ENCODE measurements at regions of chr17 and their contacts with region 1.

Region 1: GRCh38 chr17:68533887-68534694 is 21.9 kb downstream of the PRKAR1A start:
- DNase-seq: peak; percentile 50
- ATAC-seq: peak; percentile 42; the same call in 1 of the 2 replicates
- H3K4me3 ChIP-seq: no peak overlapping the region
- H3K27ac ChIP-seq: no peak overlapping the region
- H3K4me1 ChIP-seq: no peaks in the 10 kb centered on the region
- H3K27me3 ChIP-seq: no peaks in the 10 kb centered on the region
- CTCF ChIP-seq: peak; percentile 43
- POLR2A ChIP-seq: no peak
- RAD21 ChIP-seq: no peak

Region 2: DNA sequence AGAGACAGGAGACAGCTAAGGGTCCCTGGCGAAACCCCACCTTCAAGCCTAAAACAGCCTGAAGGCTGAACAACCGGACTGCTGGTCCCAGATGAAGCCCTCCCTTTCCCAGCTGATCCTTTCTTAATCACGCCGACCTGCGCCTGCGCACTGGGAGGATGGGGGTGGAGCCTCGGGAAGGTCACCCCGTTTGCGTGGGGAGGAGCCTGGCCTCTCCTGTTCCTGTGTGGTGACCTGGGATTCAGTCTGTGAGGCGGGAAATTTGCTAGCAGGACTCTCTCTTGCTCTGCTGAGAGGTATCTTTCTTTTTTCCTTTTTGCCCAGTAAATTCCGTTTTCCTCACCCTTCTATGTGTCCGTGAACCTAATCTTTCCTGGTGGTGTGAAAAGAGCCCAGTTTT is 57.5 kb after region 1 on chr17:
- CTCF ChIA-PET with region 1: no interaction called
- POLR2A ChIA-PET with region 1: no interaction called
- dilution Hi-C with region 1: no loop called
- in situ Hi-C with region 1: no loop called
- intact Hi-C with region 1: no loop called
- DNase-seq: no peak
- ATAC-seq: no peak
- H3K4me3 ChIP-seq: no peak overlapping the region
- H3K27ac ChIP-seq: no peak overlapping the region
- H3K4me1 ChIP-seq: no peaks in the 10 kb centered on the region
- H3K27me3 ChIP-seq: peaks cover 3% of the 10 kb centered on the region
- CTCF ChIP-seq: no peak
- POLR2A ChIP-seq: no peak
- RAD21 ChIP-seq: no peak

Region 3: DNA sequence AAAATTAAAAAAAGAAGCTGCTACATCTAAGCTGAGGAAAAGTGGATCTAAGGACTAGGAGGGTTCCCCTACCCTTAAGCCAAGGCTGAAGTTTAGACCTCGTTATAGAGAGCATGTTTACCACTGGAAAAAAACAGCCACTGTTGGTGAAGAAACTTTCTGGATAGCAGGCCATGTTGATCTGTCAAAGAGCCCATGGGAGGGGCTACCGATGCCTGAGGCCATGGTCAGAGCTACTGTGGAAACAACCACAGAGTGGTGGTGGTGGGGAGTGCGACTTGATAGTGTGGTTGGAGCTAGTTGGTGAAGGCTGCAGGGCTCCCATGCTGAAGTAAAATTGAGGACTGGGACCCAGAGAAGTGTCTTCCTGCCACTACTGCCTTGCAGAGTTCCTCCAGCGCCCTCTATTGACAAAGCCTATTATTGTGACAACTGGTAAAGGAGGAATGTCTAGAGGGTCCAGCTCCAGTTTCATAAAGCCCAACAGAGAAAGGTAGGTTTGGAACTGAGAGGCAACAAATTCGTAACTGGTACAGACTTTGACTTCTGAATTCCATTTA is 79.7 kb after region 1 on chr17:
- CTCF ChIA-PET with region 1: no interaction called
- POLR2A ChIA-PET with region 1: no interaction called
- dilution Hi-C with region 1: no loop called
- in situ Hi-C with region 1: no loop called
- intact Hi-C with region 1: loop called (anchors 5 kb)
- DNase-seq: no peak
- ATAC-seq: 0 out of 2 replicates have a peak, but pooled peaks have one; percentile 32
- H3K4me3 ChIP-seq: no peak overlapping the region
- H3K27ac ChIP-seq: no peak overlapping the region
- H3K4me1 ChIP-seq: no peaks in the 10 kb centered on the region
- H3K27me3 ChIP-seq: no peaks in the 10 kb centered on the region
- CTCF ChIP-seq: 0 out of 2 replicates have a peak, but pooled peaks have one; percentile 20
- POLR2A ChIP-seq: no peak
- RAD21 ChIP-seq: no peak

Region 4: DNA sequence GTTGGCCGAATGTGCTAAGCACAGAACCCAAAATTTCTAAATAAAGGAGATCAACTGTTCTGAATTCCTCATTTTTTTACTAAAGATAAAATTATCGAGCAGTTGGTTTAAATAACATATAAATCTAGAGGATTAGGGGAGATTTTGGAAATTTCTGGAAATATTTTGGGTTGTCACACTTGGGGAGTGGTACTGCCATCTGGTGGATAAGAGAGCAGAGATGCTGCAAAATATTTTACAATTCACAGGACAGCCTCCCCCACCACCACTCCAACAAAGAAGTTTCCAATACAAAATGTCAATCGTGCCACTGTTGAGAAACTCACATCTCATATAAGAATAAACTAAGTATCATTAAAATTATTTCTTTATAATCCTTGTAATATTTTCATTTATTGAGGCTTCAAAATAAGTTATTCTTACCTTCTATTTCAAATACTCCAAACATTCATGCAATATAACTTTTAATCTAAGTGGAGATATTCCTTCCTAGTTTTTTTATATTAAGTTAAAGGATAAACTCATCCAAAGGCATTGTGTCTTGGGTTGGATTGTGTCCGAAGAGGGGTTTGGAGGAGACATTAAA is 438.1 kb after region 1 on chr17:
- CTCF ChIA-PET with region 1: no interaction called
- POLR2A ChIA-PET with region 1: no interaction called
- dilution Hi-C with region 1: no loop called
- in situ Hi-C with region 1: no loop called
- intact Hi-C with region 1: no loop called
- DNase-seq: peak; percentile 36
- ATAC-seq: peak; percentile 71
- H3K4me3 ChIP-seq: no peak overlapping the region
- H3K27ac ChIP-seq: no peak overlapping the region
- H3K4me1 ChIP-seq: no peaks in the 10 kb centered on the region
- H3K27me3 ChIP-seq: no peaks in the 10 kb centered on the region
- CTCF ChIP-seq: peak; percentile 79
- POLR2A ChIP-seq: no peak
- RAD21 ChIP-seq: peak; percentile 76

Measured in IMR-90 (cell line).